ENCODE measurements at regions of chr18 and their contacts with region 1.

Region 1: DNA sequence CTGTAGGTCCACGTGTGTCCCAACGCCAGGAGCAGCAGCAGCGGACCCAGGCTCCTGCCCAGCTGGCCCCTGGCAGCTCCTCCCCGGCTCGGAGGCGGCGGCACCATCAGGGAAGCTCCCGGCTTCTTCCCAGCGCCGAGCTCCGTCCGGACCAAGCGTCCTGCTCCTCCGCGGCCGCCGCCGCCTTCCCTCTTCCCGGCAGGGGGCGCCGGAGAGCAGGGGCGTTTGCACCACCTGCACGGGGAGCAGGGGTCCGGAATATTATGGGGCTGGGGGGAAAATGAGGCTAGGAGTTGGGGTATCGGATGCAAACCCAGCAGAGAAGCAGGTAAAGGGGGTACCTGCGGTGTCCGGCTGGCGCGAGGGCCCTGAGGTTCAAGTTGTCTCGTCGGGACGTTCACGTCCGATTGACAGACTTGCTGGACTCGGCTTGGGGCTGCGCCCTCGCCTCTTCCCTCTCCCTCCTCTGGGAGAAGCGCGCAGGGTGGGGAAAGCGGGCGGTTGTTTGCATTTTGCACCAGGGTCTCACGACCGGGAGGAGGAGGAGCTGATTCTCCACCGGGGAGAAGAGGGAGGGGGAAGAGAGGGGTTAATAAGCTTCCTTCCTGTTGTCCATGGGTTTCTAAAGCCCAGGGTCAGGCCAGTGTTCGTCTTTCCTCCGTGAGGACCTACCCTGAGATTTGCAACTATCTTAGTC is at the start of gene CCBE1:
- DNase-seq: no peak
- H3K4me3 ChIP-seq: peak within 1 kb of the TSS; percentile 89
- H3K27me3 ChIP-seq: no peaks in the 10 kb centered on the region
- CTCF ChIP-seq: peak; percentile 99
- polyA plus RNA-seq, gene CCBE1: 35.4 and 51.2 TPM in 2 replicates

Region 2: GRCh38 chr18:59612381-59612780 is 85.0 kb before region 1 on chr18:
- CTCF ChIA-PET with region 1: interaction called, 11 read pairs
- POLR2A ChIA-PET with region 1: no interaction called
- DNase-seq: peak; percentile 73
- H3K4me3 ChIP-seq: no peak overlapping the region
- H3K27me3 ChIP-seq: no peaks in the 10 kb centered on the region
- CTCF ChIP-seq: no peak

Region 3: GRCh38 chr18:59661891-59662701 is 35.3 kb before region 1 on chr18:
- CTCF ChIA-PET with region 1: interaction called, 16 read pairs
- POLR2A ChIA-PET with region 1: no interaction called
- DNase-seq: no peak
- H3K4me3 ChIP-seq: no peak overlapping the region
- H3K27me3 ChIP-seq: no peaks in the 10 kb centered on the region
- CTCF ChIP-seq: no peak

Region 4: DNA sequence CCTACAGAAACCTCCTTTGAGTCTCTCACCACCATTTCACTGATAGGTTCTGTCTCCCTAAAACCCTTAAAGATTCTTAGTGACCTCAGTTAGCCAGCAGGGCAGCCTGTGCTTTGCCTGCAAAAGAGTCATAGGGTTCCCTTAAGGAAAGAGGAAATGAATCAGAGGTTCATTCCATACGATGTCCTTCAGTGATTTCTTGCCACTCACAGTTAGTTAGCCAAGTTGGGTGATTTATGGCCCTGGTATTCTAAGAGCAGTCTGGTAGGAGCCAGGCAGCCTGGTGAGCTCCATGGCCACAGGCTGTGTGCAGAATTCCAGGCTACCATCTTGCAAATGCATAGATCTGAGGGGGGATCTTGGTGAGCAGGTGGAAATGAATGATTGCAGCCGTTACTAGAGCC is 18.6 kb after region 1 on chr18:
- CTCF ChIA-PET with region 1: interaction called, 20 read pairs
- POLR2A ChIA-PET with region 1: interaction called, 3 read pairs
- DNase-seq: no peak
- H3K4me3 ChIP-seq: no peak overlapping the region
- H3K27me3 ChIP-seq: no peaks in the 10 kb centered on the region
- CTCF ChIP-seq: peak; percentile 12; the same call in 1 of the 2 replicates

Region 5: DNA sequence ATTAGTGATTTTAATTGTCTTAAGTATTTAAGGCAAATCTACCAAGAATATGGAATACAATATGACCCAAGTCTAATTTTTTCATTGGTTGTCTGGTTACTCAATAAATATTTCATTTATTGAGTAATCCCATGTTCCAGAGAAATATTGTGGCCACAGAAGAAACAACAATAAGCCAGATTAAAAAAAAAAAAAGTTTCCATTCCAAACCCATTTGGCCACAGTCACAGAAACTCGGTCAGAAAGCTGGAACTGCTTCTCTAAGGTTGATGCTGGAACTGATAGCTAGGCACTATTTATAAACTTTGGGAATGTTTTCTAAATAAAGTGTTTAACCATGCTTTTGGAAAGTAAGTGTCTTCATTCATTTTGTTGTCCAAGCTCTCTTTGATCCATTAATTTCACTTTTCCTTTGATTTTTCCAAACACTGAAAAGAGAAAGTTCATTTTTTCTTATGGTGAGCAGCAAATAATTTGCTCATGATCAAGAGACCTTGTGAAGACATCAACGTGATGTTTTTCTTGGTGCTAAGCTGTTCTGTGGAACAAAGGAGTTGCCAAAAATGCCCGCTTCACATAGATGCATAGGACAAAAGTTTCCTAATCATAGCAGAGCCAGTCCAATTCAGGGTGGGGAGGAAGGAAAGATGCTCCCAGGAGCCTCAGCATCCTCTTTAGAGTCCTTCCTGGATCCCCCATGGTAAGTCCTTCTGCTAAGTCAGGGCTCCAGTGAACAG is 71.9 kb after region 1 on chr18:
- CTCF ChIA-PET with region 1: interaction called, 20 read pairs
- POLR2A ChIA-PET with region 1: no interaction called
- DNase-seq: no peak
- H3K4me3 ChIP-seq: no peak overlapping the region
- H3K27me3 ChIP-seq: no peaks in the 10 kb centered on the region
- CTCF ChIP-seq: no peak

Region 6: GRCh38 chr18:59823596-59824195 is 126.3 kb after region 1 on chr18:
- CTCF ChIA-PET with region 1: interaction called, 76 read pairs
- POLR2A ChIA-PET with region 1: interaction called, 3 read pairs
- DNase-seq: no peak
- H3K4me3 ChIP-seq: no peak overlapping the region
- H3K27me3 ChIP-seq: no peaks in the 10 kb centered on the region
- CTCF ChIP-seq: peak; percentile 85

Measured in BJ (cell line).